Heart left ventricle (tissue), 16 donors: ENCODE measurements at regions of chr7 and their contacts with region 1.

Region 1: GRCh38 chr7:64618785-64619456 is 47.0 kb upstream of the ZNF107 start:
- DNase-seq: peak in 1 of 5 donors; percentile 21
- ATAC-seq: peak; percentile 42 to 82 (median 81)
- H3K4me3 ChIP-seq: no peak overlapping the region
- H3K27ac ChIP-seq: no peak overlapping the region
- H3K4me1 ChIP-seq: peaks cover 0 to 3% (median 0%) of the 10 kb centered on the region in 12 donors
- H3K27me3 ChIP-seq: peaks cover 0 to 5% (median 0%) of the 10 kb centered on the region in 9 donors
- CTCF ChIP-seq: peak; percentile 49 to 82 (median 72)
- POLR2A ChIP-seq: no peak

Region 2: DNA sequence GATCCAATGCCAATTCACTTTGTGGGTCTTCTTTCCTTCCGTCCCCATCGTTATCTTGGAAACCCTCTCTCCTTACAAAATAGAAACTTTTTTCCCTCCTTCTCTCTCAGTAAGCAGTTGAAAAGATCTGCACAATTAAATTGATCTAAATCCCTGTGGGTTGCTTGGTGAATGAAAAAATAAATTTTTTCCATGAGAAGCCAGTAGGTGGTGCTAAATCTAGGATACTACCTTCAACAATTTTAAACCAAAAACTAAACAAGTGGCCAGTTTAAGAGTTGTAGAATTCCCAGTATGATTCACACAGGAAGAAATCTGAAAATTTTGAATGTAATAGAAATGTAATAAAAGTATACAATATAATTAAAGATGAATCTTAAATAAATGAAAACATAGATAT is 1610.6 kb before region 1 on chr7:
- intact Hi-C with region 1: loop called in 8 of 10 experiments (anchors 2 to 10 kb)
- DNase-seq: no peak
- ATAC-seq: no peak
- H3K4me3 ChIP-seq: no peak overlapping the region
- H3K27ac ChIP-seq: no peak overlapping the region
- H3K4me1 ChIP-seq: no peaks in the 10 kb centered on the region
- H3K27me3 ChIP-seq: no peaks in the 10 kb centered on the region
- CTCF ChIP-seq: peak in 6 of 12 donors; percentile 6 to 34 (median 14)
- POLR2A ChIP-seq: no peak

Region 3: DNA sequence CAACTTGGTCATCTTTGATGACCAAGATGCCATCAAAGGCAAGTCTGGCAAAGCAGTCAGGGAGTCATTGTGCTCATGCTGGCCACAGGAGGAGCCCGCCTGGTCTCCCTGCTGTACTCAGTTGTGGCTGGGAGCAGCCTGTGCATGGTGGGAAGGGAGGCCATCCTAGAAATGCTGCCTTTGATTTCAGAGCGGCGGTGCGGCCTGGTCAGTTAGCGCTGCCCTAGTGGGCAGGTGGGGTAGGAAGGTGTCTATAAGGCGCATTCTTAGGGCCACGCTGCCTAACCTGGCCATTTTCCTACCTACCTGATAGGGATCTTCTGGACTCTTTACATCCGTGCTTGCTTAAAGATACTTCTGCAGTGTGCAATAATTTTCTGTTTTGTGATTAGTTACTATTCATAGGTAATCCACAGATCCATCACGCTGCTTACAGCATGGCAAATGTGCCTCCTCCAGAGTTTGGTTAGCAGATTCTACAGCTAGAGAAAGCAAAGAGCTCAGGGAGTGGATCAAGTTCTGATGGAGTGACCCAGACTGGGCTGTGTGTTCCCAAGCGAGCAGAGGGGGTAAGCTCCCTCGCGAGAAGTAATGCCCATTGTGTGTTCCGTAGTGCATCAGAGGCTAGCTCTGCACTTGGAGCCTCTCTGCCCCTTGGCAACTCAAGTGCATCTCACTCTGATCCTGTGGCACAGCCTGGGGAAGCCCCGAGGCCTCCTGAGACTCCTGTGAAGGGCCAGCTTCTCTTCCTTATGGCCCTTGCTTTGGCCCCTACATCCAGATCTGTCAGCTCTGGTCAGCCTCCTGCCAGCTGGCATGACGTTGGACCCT is 1590.3 kb before region 1 on chr7:
- intact Hi-C with region 1: loop called in 1 of 10 experiments (anchors 10 kb)
- DNase-seq: no peak
- ATAC-seq: no peak
- H3K4me3 ChIP-seq: no peak overlapping the region
- H3K27ac ChIP-seq: no peak overlapping the region
- H3K4me1 ChIP-seq: no peaks in the 10 kb centered on the region
- H3K27me3 ChIP-seq: peaks cover 0 to 6% (median 0%) of the 10 kb centered on the region in 9 donors
- CTCF ChIP-seq: no peak
- POLR2A ChIP-seq: no peak

Region 4: GRCh38 chr7:64183126-64183742 is 435.7 kb before region 1 on chr7:
- intact Hi-C with region 1: loop called (anchors 1 to 5 kb)
- DNase-seq: peak in 1 of 5 donors; percentile 32
- ATAC-seq: peak in 3 of 4 donors; percentile 18 to 55 (median 43)
- H3K4me3 ChIP-seq: no peak overlapping the region
- H3K27ac ChIP-seq: no peak overlapping the region
- H3K4me1 ChIP-seq: peaks cover 0 to 8% (median 0%) of the 10 kb centered on the region in 12 donors
- H3K27me3 ChIP-seq: peaks cover 0 to 39% (median 17%) of the 10 kb centered on the region in 9 donors
- CTCF ChIP-seq: peak; percentile 58 to 88 (median 80)
- POLR2A ChIP-seq: no peak

Region 5: DNA sequence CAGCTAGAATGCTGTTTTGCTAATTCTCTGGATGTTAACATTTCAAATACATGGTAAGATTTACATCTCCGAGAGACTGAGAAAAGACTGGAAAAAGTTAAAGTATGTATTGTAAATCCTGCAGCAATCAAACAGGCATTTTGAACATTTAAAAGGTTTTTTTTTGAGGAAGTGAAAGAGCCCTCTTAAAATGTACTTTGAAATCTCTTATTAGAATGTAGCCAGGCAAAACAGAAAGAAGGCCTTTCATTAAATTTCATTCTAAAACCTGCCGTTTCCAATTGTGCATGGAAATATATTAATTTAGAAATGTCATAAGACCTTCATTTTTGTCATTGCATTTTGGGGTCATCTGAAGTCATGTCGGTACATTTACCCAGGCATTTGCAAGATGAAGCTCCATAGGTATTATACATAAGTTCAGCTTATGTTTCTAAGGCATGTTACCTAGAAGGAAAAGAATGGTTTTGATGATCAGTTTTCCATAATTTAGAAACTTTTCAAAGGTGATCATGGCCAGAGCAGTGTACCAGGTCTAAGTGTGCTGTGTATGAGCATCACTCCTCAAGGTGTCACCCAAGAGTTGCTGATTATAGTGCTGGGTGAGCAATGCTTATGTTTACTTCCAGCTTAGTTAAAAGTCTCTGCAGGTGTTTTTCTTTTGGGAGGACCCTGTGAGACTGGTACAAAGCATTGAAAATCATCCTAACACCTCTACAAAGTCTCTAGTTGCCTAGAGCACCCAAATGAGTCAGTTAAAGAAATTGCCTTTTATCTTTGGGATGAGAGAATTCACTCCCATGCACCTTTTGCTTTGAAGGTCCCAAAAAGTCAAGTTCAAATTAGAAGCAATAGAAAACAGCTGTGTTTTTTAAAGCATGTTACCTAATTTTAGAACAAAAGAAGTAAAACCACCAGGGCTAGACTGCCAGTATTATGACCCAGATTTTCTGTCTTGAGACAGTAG is 298.1 kb before region 1 on chr7:
- intact Hi-C with region 1: loop called in 3 of 10 experiments (anchors 2 to 10 kb)
- DNase-seq: no peak
- ATAC-seq: peak in 3 of 4 donors; percentile 67 to 75 (median 67)
- H3K4me3 ChIP-seq: no peak overlapping the region
- H3K27ac ChIP-seq: no peak overlapping the region
- H3K4me1 ChIP-seq: peaks cover 0 to 3% (median 0%) of the 10 kb centered on the region in 12 donors
- H3K27me3 ChIP-seq: no peaks in the 10 kb centered on the region
- CTCF ChIP-seq: peak in 6 of 12 donors; percentile 10 to 41 (median 24)
- POLR2A ChIP-seq: no peak